Left lung (tissue), 14 donors: ENCODE measurements at regions of chr1 and their contacts with region 1.

Region 1: DNA sequence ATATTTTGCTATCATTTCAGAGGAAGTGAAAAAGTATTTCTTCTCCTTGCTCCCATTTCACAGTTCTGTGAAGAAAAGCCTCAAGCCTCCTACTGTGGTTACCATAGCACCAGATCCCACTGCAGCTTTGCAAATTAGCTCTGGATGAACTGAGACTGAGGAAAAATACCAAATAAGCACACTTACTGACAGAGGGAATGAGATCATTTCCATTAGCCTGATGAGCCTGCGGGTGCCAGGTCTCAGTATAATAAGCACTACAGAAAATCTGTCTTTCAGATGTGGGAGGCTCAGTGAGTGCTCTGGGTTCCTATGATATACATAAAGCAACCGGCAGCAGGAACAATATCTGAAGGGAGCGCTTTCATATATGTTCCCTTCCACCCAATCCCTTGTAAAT is 21.4 kb downstream of the XKR8 start:
- DNase-seq: no peak
- ATAC-seq: no peak
- H3K4me3 ChIP-seq: no peak overlapping the region
- H3K27ac ChIP-seq: no peak overlapping the region
- H3K4me1 ChIP-seq: peaks cover 0 to 13% of the 10 kb centered on the region in 2 donors
- H3K27me3 ChIP-seq: no peaks in the 10 kb centered on the region
- CTCF ChIP-seq: no peak

Region 2: GRCh38 chr1:27752360-27752759 is 228.8 kb before region 1 on chr1:
- intact Hi-C with region 1: no loop called
- DNase-seq: peak in 2 of 4 donors; percentile 88 to 92
- ATAC-seq: no peak
- H3K4me3 ChIP-seq: no peak overlapping the region
- H3K27ac ChIP-seq: peak overlapping the region in 1 of 2 donors; percentile 35
- H3K4me1 ChIP-seq: no peaks in the 10 kb centered on the region
- H3K27me3 ChIP-seq: no peaks in the 10 kb centered on the region
- CTCF ChIP-seq: no peak

Region 3: GRCh38 chr1:27858072-27858958 is 122.8 kb before region 1 on chr1:
- intact Hi-C with region 1: loop called in 1 of 2 experiments (anchors 2 kb)
- DNase-seq: peak; percentile 71 to 94 (median 84)
- ATAC-seq: peak; percentile 95
- H3K4me3 ChIP-seq: no peak overlapping the region
- H3K27ac ChIP-seq: peak overlapping the region in 1 of 2 donors; percentile 47
- H3K4me1 ChIP-seq: peaks cover 6 to 42% of the 10 kb centered on the region in 2 donors
- H3K27me3 ChIP-seq: no peaks in the 10 kb centered on the region
- CTCF ChIP-seq: peak; percentile 97 to 98

Region 4: DNA sequence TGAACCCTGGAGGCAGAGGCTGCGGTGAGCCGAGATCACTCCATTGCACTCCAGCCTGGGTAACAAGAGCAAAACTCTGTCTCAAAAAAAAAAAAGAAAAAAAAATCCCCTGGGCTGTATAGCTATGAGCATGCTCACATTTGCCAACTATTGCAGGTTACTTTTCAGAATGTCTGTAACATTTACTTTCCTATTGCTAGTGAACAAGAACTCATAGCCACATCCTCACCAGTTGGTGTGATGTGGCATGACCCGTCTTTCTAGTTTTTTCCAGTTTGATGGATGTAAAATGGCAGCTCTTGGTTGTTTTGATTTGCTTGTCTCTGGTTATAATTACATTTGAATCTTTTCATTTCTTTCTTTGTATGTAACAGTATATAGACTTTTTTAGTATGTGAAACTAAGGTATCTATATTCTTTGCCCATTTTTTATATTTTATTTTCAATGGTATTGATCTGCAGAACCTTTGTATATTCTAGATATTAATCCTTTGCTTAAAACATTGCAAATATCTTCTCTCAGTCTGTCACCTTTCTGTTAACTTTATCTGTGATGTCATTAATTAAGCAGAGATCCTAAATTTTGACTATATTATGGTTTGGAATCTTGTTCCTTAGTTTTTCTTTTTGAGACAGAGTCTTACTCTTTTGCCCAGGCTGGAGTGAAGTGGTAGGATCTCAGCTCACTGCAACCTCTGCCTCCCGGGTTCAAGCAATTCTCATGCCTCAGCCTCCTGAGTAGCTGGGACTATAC is 359.3 kb after region 1 on chr1:
- intact Hi-C with region 1: no loop called
- DNase-seq: no peak
- ATAC-seq: no peak
- H3K4me3 ChIP-seq: no peak overlapping the region
- H3K27ac ChIP-seq: no peak overlapping the region
- H3K4me1 ChIP-seq: no peaks in the 10 kb centered on the region
- H3K27me3 ChIP-seq: no peaks in the 10 kb centered on the region
- CTCF ChIP-seq: no peak